Calu3 (cell line): ENCODE measurements at regions of chr18 and their contacts with region 1.

Region 1: DNA sequence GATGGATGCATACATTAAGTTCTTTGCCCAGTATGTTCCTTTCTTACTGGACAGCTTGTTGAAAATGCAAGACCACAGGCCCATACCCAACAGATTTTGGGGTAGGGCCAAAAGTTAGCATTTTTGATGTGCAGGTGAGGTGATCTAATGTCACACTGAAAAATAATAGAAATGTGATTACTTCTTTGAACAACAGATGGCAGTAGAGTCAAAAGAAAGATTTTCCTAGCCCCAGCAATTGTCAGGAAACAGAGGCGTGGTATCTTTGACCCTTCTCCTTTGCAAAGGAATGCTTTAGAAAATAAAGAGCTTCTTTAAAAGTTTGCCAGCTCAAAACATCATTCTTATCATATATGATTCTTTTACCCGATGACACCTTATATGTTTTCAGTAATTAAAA is 343.6 kb upstream of the SYT4 start:
- DNase-seq: peak; percentile 3
- H3K4me3 Mint-ChIP-seq: no peak overlapping the region
- H3K27ac Mint-ChIP-seq: no peak overlapping the region
- H3K4me1 Mint-ChIP-seq: peaks cover 9% of the 10 kb centered on the region
- H3K27me3 Mint-ChIP-seq: no peaks in the 10 kb centered on the region
- CTCF ChIP-seq: peak; percentile 40

Region 2: DNA sequence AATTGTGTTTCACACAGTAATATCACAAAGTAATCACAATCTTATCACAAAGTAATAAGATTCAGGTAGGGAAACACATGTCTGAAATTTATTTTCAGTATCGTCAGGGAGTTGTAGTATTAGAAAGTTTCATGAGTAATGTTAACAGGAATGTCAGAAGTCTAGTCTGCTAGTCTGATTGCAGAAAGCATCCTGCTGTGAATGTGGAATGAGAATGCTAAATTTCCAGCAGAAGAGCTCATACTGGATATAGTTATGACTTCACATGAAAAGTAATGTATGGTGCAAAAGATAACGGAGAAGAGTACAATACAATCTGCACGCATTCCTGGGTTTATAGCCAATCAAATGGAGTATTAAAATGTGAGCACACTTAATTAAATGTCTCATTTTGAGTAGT is 565.1 kb after region 1 on chr18:
- CTCF ChIA-PET with region 1: no interaction called
- intact Hi-C with region 1: loop called (anchors 1 kb)
- DNase-seq: no peak
- H3K4me3 Mint-ChIP-seq: no peak overlapping the region
- H3K27ac Mint-ChIP-seq: no peak overlapping the region
- H3K4me1 Mint-ChIP-seq: peaks cover 25% of the 10 kb centered on the region
- H3K27me3 Mint-ChIP-seq: no peaks in the 10 kb centered on the region
- CTCF ChIP-seq: no peak

Region 3: DNA sequence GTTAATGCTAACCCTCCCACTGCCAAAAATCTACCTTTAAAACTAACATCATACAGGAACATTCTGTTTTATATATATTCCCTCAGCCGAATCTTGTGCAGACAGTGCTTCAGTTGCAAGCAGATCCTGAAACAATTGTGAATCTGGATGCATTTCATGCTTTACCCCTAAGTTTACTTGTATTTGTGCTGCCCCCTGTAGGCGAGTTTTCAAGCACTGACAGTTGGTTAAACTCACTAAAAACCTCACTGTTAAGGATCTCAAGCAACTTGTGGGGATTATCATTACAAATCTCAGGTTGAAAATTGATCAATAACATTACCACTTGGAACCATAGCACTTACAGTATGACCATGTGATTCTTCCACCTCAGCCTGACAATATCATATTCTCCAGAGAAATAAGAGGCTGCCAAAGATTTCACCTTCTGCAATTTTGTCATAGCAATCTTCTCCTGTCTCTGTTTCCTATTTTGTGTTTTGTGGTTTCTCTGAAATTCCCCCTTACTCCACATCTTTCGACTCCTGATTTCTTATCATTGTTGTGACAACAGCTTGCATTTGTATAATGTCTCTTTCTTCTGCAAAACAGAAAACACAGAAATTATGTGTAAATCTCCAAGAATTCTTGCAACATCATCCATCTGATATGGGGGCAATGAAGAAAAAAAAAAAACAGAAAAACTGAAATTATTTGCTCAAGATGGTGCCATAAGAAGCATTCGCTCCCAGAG is 705.1 kb after region 1 on chr18:
- CTCF ChIA-PET with region 1: no interaction called
- intact Hi-C with region 1: loop called (anchors 5 kb)
- DNase-seq: peak; percentile 78
- H3K4me3 Mint-ChIP-seq: no peak overlapping the region
- H3K27ac Mint-ChIP-seq: no peak overlapping the region
- H3K4me1 Mint-ChIP-seq: no peaks in the 10 kb centered on the region
- H3K27me3 Mint-ChIP-seq: no peaks in the 10 kb centered on the region
- CTCF ChIP-seq: peak; percentile 63

Region 4: DNA sequence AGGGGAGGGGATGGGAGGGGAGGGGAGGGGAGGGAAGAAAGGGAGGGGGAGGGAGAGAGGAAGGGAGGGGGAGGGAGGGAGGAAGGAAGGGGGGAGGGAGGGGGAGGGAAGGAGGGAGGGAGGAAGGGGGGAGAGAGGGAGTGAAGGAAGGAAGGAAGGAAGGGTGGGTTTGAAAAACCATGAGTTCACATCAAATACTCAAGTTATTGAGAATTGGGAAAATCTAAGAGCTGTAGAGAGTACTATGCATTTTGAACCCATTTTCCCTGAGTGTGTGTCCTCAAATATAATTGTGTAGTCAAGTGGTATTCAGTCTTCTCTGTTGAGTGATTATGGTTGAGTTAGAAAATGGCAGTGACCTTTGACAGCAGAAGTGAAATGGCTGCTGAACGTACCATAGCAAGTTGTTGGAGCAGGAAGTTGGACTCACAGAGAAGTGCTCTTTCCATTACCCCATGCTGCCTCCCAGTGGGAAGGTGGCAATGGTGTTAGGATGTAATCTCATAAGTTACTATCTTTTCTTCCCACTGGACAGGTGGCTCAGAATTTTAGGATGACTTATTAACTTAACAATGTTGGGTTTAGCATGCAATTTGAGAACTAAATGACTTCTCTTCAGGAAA is 1274.4 kb after region 1 on chr18:
- CTCF ChIA-PET with region 1: no interaction called
- intact Hi-C with region 1: loop called (anchors 5 kb)
- DNase-seq: peak; percentile 61
- H3K4me3 Mint-ChIP-seq: no peak overlapping the region
- H3K27ac Mint-ChIP-seq: no peak overlapping the region
- H3K4me1 Mint-ChIP-seq: peaks cover 9% of the 10 kb centered on the region
- H3K27me3 Mint-ChIP-seq: no peaks in the 10 kb centered on the region
- CTCF ChIP-seq: no peak